Activated CD8-positive, alpha-beta T cell treated with anti-CD3 and anti-CD28 coated beads, Interleukin-2, amount 10 ng/mL, durations not matched to agents 7 days and 5 days (primary cell): ENCODE measurements at regions of chr15 and their contacts with region 1.

Region 1: GRCh38 chr15:65304389-65305144 is at the start of gene RNU5B-1:
- DNase-seq: peak; percentile 90
- ATAC-seq: peak; percentile 73
- H3K4me3 Mint-ChIP-seq: peak within 1 kb of the TSS; percentile 92
- H3K27ac Mint-ChIP-seq: peak within 1 kb of the TSS; percentile 95
- H3K4me1 Mint-ChIP-seq: peaks cover 42% of the 10 kb centered on the region
- H3K27me3 Mint-ChIP-seq: no peaks in the 10 kb centered on the region
- total RNA-seq, gene RNU5B-1: 19.9 TPM in 1 of 2 experiments, not detected in the other

Region 2: GRCh38 chr15:65054333-65055200 is 250.0 kb before region 1 on chr15:
- CTCF ChIA-PET with region 1: interaction called, 4 read pairs
- POLR2A ChIA-PET with region 1: interaction called, 10 read pairs
- DNase-seq: peak; percentile 77
- ATAC-seq: peak; percentile 66
- H3K4me3 Mint-ChIP-seq: no peak overlapping the region
- H3K27ac Mint-ChIP-seq: no peak overlapping the region
- H3K4me1 Mint-ChIP-seq: peaks cover 23% of the 10 kb centered on the region
- H3K27me3 Mint-ChIP-seq: peaks cover 5% of the 10 kb centered on the region

Region 3: GRCh38 chr15:65184868-65185738 is 119.5 kb before region 1 on chr15 and contains the start of gene CLPX:
- CTCF ChIA-PET with region 1: interaction called, 8 read pairs
- POLR2A ChIA-PET with region 1: interaction called, 59 read pairs
- DNase-seq: peak; percentile 93
- ATAC-seq: peak; percentile 97
- H3K4me3 Mint-ChIP-seq: peak within 1 kb of the TSS; percentile 97
- H3K27ac Mint-ChIP-seq: peak within 1 kb of the TSS; percentile 90
- H3K4me1 Mint-ChIP-seq: peaks cover 32% of the 10 kb centered on the region
- H3K27me3 Mint-ChIP-seq: no peaks in the 10 kb centered on the region
- total RNA-seq, gene CLPX: 40.5 to 42.9 TPM

Region 4: DNA sequence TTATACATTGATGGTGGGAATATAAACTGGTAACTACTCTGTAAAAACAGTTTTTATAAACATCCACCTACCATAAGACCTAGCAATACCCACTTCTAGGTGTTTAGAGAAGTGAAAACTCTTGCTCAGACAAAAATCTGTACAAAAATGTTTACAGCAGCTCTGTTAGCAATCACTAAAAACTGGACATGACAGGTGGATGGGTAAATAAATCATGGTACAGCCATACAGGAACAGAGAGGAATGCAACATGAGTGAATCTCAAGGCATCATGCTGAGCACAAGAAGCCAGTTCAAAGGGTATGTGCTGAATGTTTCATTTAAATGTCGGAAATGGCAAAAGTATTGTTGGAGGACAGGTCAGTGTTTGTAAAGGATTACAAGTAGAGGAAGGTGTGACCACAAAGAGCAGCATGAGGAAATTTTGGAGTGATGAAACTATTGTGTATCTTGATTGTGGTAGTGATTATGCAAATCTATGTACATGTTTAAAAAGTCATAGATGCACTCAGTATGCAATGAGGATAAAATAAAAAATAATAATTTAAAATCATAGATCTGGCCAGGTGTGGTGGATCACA is 11.5 kb before region 1 on chr15:
- CTCF ChIA-PET with region 1: interaction called, 9 read pairs
- POLR2A ChIA-PET with region 1: interaction called, 115 read pairs
- DNase-seq: no peak
- ATAC-seq: no peak
- H3K4me3 Mint-ChIP-seq: no peak overlapping the region
- H3K27ac Mint-ChIP-seq: peak overlapping the region; percentile 20
- H3K4me1 Mint-ChIP-seq: peaks cover 41% of the 10 kb centered on the region
- H3K27me3 Mint-ChIP-seq: no peaks in the 10 kb centered on the region

Region 5: DNA sequence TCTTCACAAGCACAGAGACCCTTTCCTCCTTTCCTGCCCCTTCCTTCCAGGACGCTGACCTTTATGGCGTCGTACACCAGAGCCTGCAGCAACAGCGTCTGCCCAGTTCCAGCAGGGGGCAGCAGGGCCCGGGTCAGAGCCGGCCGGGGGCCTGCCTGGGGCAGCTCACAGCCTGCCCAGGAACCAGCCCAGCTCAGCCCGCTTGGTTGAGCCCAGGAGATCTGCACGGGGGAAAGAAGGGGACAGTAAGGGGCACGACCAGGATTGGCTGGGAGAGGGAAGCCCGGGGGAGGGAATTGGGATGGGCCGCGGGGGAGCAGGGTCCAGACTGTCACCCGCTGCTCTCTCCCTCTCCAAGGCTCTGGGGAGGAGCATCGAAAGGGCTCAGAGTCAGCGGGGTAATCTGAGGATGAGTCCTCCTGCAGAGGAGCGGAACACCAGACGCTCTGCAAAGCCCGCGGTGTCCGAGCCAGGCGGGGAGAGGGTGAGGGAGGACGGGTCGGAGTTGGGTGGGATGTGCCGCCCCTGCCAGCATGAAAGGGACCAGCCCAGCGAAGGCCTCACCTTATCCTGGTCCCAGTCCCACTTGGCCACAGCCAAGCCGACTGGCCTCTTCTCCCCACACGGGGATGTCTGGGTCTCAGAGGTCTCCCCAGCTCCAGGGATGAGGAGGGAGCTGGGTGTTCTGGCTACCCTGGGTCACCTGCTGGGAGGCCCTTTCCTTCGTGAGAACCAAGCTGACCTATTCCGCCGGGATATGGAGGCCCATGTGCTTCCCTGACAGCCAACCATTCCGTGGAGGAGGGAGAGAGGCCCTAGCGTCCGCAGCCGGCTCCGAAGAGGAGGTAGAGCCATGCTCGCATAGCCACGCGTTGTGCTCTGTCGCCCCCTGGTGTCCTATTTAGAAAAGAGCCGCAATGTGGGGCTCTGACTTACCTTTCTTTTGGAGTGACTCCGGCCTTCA is 80.6 kb after region 1 on chr15:
- CTCF ChIA-PET with region 1: interaction called, 5 read pairs
- POLR2A ChIA-PET with region 1: interaction called, 10 read pairs
- DNase-seq: peak; percentile 89
- ATAC-seq: peak; percentile 88
- H3K4me3 Mint-ChIP-seq: peak overlapping the region; percentile 79
- H3K27ac Mint-ChIP-seq: peak overlapping the region; percentile 72
- H3K4me1 Mint-ChIP-seq: peaks cover 14% of the 10 kb centered on the region
- H3K27me3 Mint-ChIP-seq: peaks cover 25% of the 10 kb centered on the region

Region 6: DNA sequence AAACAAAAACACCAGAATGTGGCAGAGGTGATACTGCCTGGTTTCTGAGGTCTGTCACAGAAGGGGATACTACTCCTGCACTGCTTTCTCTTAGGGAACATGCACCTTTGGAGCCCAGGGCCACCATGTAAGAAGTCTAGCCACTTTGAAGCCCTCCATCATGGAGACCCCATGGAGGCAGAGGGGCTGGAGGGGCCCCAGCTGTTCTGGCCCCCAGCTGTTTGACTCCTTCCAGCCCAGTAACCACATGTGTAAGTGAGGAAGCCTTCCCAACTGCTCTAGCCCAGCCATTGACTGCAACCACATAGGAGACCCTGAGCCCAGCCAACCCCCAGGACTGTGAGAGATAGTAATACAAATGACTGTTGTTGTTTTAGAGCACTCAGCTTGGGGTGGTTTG is 127.2 kb after region 1 on chr15:
- CTCF ChIA-PET with region 1: no interaction called
- POLR2A ChIA-PET with region 1: no interaction called
- DNase-seq: no peak
- ATAC-seq: no peak
- H3K4me3 Mint-ChIP-seq: no peak overlapping the region
- H3K27ac Mint-ChIP-seq: no peak overlapping the region
- H3K4me1 Mint-ChIP-seq: no peaks in the 10 kb centered on the region
- H3K27me3 Mint-ChIP-seq: no peaks in the 10 kb centered on the region